ENCODE measurements at regions of chr11 and their contacts with region 1.

Region 1: DNA sequence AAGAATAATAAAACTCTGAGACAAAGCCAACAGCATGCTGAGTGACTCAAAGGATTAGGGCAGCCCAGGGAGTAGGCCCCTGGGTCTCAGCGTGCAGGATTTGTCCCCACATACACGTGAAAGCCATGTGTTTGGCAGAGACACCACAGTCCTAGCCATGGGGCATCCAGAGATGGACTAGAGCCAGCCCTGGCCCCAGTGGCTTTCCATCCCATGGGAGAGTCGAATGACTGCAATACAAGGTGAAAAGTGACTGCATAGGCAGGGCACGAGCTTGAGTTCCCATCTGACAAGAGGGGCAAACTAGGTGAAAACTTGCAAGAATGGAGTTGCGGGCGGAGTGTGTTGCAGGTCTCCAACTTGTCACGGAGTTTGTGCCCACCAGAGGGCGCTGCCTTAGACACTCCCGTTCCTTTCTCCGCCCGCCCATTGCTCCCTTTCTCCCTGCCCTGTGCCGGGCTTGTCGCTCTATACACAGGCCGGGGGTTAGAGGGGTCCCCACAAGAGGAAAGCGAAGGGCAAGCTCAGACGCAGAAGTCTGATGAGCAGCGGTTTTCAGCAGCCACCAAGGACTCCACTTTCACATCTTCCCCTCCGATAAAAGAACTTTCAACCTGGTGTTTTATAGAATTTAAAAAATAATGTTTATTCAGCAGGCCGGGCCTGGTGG is 24.2 kb downstream of the TSKU start:
- DNase-seq: peak; percentile 76
- H3K4me3 ChIP-seq: no peak overlapping the region
- H3K27ac ChIP-seq: no peak overlapping the region
- H3K4me1 ChIP-seq: peaks cover 3% of the 10 kb centered on the region
- H3K27me3 ChIP-seq: no peaks in the 10 kb centered on the region
- CTCF ChIP-seq: peak; percentile 80 to 87
- POLR2A ChIP-seq: no peak

Region 2: GRCh38 chr11:76835928-76836612 is 28.7 kb after region 1 on chr11:
- CTCF ChIA-PET with region 1: interaction called, 32 read pairs
- POLR2A ChIA-PET with region 1: no interaction called
- dilution Hi-C with region 1: no loop called
- intact Hi-C with region 1: loop called (anchors 1 kb)
- DNase-seq: peak; percentile 64
- H3K4me3 ChIP-seq: no peak overlapping the region
- H3K27ac ChIP-seq: no peak overlapping the region
- H3K4me1 ChIP-seq: peaks cover 33% of the 10 kb centered on the region
- H3K27me3 ChIP-seq: no peaks in the 10 kb centered on the region
- CTCF ChIP-seq: no peak
- POLR2A ChIP-seq: no peak

Region 3: DNA sequence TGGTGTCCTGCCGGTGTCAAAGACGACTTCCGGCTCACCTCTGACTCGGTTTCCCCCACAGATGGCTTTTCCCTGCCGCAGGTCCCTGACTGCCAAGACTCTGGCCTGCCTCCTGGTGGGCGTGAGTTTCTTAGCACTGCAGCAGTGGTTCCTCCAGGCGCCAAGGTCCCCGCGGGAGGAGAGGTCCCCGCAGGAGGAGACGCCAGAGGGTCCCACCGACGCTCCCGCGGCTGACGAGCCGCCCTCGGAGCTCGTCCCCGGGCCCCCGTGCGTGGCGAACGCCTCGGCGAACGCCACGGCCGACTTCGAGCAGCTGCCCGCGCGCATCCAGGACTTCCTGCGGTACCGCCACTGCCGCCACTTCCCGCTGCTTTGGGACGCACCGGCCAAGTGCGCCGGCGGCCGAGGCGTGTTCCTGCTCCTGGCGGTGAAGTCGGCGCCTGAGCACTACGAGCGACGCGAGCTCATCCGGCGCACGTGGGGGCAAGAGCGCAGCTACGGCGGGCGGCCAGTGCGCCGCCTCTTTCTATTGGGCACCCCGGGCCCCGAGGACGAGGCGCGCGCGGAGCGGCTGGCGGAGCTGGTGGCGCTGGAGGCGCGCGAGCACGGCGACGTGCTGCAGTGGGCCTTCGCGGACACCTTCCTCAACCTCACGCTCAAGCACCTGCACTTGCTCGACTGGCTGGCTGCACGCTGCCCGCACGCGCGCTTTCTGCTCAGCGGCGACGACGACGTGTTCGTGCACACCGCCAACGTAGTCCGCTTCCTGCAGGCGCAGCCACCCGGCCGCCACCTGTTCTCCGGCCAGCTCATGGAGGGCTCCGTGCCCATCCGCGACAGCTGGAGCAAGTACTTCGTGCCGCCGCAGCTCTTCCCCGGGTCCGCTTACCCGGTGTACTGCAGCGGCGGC is 232.4 kb after region 1 on chr11:
- CTCF ChIA-PET with region 1: interaction called, 3 read pairs
- POLR2A ChIA-PET with region 1: no interaction called
- dilution Hi-C with region 1: no loop called
- intact Hi-C with region 1: loop called (anchors 2 kb)
- DNase-seq: peak; percentile 53
- H3K4me3 ChIP-seq: peak overlapping the region in 2 of 3 experiments; percentile 8 to 36
- H3K27ac ChIP-seq: no peak overlapping the region
- H3K4me1 ChIP-seq: peaks cover 2% of the 10 kb centered on the region
- H3K27me3 ChIP-seq: peaks cover 8 to 11% of the 10 kb centered on the region in 2 experiments
- CTCF ChIP-seq: peak; percentile 48 to 70
- POLR2A ChIP-seq: no peak